Endothelial cell of umbilical vein (primary cell): ENCODE measurements at regions of chr3 and their contacts with region 1.

Region 1: GRCh38 chr3:129596194-129597086 is 10.0 kb downstream of the PLXND1 start:
- DNase-seq: peak; percentile 98
- H3K4me3 ChIP-seq: peak overlapping the region in 2 of 3 experiments; percentile 1 to 10
- H3K27ac ChIP-seq: peak overlapping the region; percentile 91
- H3K4me1 ChIP-seq: peaks cover 96% of the 10 kb centered on the region
- H3K27me3 ChIP-seq: no peaks in the 10 kb centered on the region
- CTCF ChIP-seq: no peak
- POLR2A ChIP-seq: peak; percentile 45

Region 2: DNA sequence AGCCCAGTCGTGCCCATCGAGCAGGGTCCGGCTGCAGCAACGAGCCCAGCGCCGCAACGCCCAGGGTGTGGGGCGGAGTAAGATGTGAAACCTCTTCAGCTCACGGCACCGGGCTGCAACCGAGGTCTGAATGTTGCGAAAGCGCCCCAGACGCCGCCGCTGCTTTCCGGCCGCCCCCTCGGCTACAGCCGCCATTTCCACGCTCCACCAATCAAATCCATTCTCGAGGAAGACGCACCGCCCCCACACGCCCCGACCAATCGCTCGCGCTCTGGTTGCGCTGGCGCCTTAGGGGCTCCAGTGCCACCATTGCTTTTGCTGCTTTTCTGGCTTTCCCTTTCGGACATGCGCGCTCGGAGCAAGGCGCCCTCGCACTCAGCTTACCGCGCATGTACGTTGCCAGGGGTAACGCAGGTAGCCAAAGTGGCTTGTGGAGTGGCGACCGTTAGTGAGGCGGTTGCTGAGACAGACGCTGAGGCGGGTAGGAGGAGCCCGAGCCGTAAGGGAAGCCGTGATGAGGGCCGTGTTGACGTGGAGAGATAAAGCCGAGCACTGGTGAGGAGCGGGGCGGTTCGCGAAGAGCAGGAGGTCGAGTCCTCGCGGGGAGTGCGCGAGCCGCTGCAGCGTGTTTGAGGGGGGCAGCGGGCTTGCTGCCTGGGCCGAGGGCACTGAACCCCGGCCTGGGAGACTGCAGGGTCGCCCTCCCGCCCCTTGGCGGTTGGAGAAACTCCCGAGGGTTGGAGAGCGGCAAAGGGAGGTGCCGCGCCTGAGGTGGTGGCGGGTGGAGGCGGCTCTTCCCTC is 156.4 kb before region 1 on chr3 and contains the starts of genes IFT122 and MBD4:
- CTCF ChIA-PET with region 1: interaction called, 3 read pairs
- POLR2A ChIA-PET with region 1: interaction called, 3 read pairs
- dilution Hi-C with region 1: no loop called
- intact Hi-C with region 1: loop called (anchors 2 kb)
- DNase-seq: peak; percentile 100
- H3K4me3 ChIP-seq: peak within 1 kb of the TSS; percentile 70 to 81 (median 72)
- H3K27ac ChIP-seq: peak within 1 kb of the TSS; percentile 75
- H3K4me1 ChIP-seq: peaks cover 44% of the 10 kb centered on the region
- H3K27me3 ChIP-seq: no peaks in the 10 kb centered on the region
- CTCF ChIP-seq: no peak
- POLR2A ChIP-seq: peak; percentile 79
- total RNA-seq, gene IFT122: 36.6 and 41.7 TPM in 2 replicates
- total RNA-seq, gene MBD4: 33.2 and 39.5 TPM in 2 replicates

Region 3: DNA sequence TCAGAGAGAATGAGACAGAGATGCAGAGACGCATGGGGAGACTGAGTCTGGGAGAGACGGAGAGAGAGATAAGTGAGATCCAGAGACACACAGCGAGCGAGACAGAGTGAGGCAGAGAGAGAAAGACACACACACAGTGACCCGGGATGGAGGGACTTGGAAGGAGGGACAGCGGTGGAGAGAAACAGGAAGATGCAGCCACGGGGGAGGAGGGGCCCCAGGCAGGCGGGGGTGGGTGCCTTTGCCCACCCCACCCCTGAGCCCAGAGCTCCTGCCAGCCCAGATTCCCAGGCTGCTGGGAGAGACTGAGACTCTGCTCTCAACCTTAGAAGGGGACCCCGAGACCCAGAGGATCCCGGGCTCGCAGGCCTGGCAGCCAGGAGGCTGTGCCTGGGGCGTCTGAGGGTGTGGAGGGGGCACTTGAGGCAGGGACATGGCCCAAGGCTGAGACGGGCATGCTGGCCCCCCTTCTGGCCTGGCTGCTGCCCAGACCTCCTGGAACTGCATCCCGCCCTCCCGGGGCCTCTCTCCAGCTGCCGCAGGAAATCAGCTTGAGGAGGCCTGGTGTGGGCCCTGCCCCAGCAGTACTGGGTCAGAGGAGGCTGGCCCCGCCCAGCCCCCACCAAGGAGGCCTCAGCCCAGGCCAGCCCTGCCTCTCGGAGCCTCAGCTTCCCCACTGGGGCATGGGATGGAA is 35.4 kb before region 1 on chr3:
- CTCF ChIA-PET with region 1: interaction called, 4 read pairs
- POLR2A ChIA-PET with region 1: interaction called, 3 read pairs
- dilution Hi-C with region 1: no loop called
- intact Hi-C with region 1: loop called (anchors 2 kb)
- DNase-seq: peak; percentile 82
- H3K4me3 ChIP-seq: no peak overlapping the region
- H3K27ac ChIP-seq: peak overlapping the region; percentile 26
- H3K4me1 ChIP-seq: peaks cover 42% of the 10 kb centered on the region
- H3K27me3 ChIP-seq: no peaks in the 10 kb centered on the region
- CTCF ChIP-seq: no peak
- POLR2A ChIP-seq: peak; percentile 44

Region 4: GRCh38 chr3:129576514-129577352 is 19.7 kb before region 1 on chr3:
- CTCF ChIA-PET with region 1: interaction called, 10 read pairs
- POLR2A ChIA-PET with region 1: interaction called, 3 read pairs
- dilution Hi-C with region 1: no loop called
- intact Hi-C with region 1: no loop called
- DNase-seq: peak; percentile 37
- H3K4me3 ChIP-seq: no peak overlapping the region
- H3K27ac ChIP-seq: peak overlapping the region; percentile 52
- H3K4me1 ChIP-seq: peaks cover 12% of the 10 kb centered on the region
- H3K27me3 ChIP-seq: no peaks in the 10 kb centered on the region
- CTCF ChIP-seq: no peak
- POLR2A ChIP-seq: no peak

Region 5: GRCh38 chr3:129606636-129607390 is 10.4 kb after region 1 on chr3 and contains the start of gene PLXND1:
- CTCF ChIA-PET with region 1: interaction called, 33 read pairs
- POLR2A ChIA-PET with region 1: interaction called, 10 read pairs
- dilution Hi-C with region 1: no loop called
- intact Hi-C with region 1: loop called (anchors 1 kb)
- DNase-seq: peak; percentile 81
- H3K4me3 ChIP-seq: peak within 1 kb of the TSS; percentile 36 to 87 (median 63)
- H3K27ac ChIP-seq: peak within 1 kb of the TSS; percentile 85
- H3K4me1 ChIP-seq: peaks cover 54% of the 10 kb centered on the region
- H3K27me3 ChIP-seq: no peaks in the 10 kb centered on the region
- CTCF ChIP-seq: no peak
- POLR2A ChIP-seq: peak; percentile 79
- total RNA-seq, gene PLXND1: 834 and 860 TPM in 2 replicates

Region 6: DNA sequence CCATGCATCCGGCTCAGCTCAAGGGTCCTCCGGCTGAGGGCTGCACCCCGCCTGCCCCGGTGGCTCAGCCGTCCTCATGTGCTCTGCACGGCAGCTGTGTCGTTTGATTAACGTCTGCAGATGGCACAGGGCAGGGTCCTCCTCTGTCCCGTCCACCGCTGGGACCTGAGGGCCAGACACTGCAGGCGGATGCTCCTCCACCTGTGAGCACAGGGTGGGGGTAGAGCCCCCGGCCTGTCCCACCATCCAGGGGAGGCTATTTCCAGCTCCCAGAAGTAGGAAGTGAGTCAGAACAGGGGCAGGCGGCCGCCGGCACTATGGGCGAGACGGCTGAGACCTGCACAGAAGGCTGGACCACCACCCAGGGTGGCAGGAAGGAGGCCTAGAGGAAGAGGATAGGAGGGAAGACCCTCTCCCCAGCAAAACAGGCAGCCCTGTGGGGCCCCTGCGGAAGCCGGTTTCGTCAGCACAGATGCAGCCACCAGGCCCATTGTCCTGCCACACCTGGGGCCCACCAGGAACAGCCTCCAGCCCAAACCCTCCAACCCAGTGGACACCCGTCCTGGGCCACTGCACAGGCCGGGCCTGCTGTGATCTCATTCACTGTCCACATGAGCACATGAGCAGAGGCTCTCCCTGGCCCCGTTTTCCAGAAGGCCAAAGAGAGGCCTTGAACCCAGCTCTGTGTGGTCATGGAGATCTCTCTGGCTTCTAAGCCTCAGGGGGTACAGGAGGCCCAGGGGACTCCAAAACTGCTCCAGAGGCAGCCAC is 22.6 kb after region 1 on chr3:
- CTCF ChIA-PET with region 1: interaction called, 15 read pairs
- POLR2A ChIA-PET with region 1: no interaction called
- dilution Hi-C with region 1: no loop called
- intact Hi-C with region 1: loop called (anchors 1 kb)
- DNase-seq: peak; percentile 72
- H3K4me3 ChIP-seq: peak overlapping the region in 1 of 3 experiments; percentile 27
- H3K27ac ChIP-seq: peak overlapping the region; percentile 72
- H3K4me1 ChIP-seq: peaks cover 57% of the 10 kb centered on the region
- H3K27me3 ChIP-seq: no peaks in the 10 kb centered on the region
- CTCF ChIP-seq: no peak
- POLR2A ChIP-seq: no peak